A673 (cell line): ENCODE measurements at regions of chr6 and their contacts with region 1.

Region 1: GRCh38 chr6:72905705-72906478 is 284.0 kb downstream of the KCNQ5 start:
- DNase-seq: no peak
- H3K4me3 ChIP-seq: no peak overlapping the region
- H3K27ac ChIP-seq: no peak overlapping the region
- H3K4me1 ChIP-seq: peaks cover 24% of the 10 kb centered on the region
- H3K27me3 ChIP-seq: no peaks in the 10 kb centered on the region
- CTCF ChIP-seq: no peak

Region 2: DNA sequence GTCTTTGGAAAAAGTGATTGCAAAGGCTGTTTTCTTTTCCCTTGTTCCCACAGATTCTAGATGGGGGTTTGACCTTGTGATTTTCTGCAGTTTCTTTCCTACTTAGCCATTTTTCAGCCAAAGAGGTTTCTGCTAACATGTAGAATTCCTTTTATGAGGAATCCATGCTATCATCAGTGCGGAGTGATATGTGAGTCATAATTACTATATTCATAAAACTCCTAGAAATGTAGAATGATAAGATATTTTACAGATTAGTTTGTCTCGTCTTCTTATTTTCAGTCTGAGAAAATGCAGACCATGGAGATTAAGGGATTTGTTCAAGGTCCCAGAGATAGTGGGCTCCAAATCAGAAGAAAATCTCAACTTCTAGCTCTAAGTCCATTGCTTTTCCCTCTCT is 185.4 kb before region 1 on chr6:
- CTCF ChIA-PET with region 1: no interaction called
- POLR2A ChIA-PET with region 1: no interaction called
- intact Hi-C with region 1: no loop called
- DNase-seq: no peak
- H3K4me3 ChIP-seq: no peak overlapping the region
- H3K27ac ChIP-seq: no peak overlapping the region
- H3K4me1 ChIP-seq: peaks cover 15% of the 10 kb centered on the region
- H3K27me3 ChIP-seq: no peaks in the 10 kb centered on the region
- CTCF ChIP-seq: no peak

Region 3: GRCh38 chr6:72811971-72812421 is 93.9 kb before region 1 on chr6:
- CTCF ChIA-PET with region 1: no interaction called
- POLR2A ChIA-PET with region 1: no interaction called
- intact Hi-C with region 1: loop called (anchors 5 kb)
- DNase-seq: no peak
- H3K4me3 ChIP-seq: no peak overlapping the region
- H3K27ac ChIP-seq: no peak overlapping the region
- H3K4me1 ChIP-seq: peaks cover 5% of the 10 kb centered on the region
- H3K27me3 ChIP-seq: no peaks in the 10 kb centered on the region
- CTCF ChIP-seq: no peak